Gastrocnemius medialis (tissue), 4 donors: ENCODE measurements at regions of chr5 and their contacts with region 1.

Region 1: DNA sequence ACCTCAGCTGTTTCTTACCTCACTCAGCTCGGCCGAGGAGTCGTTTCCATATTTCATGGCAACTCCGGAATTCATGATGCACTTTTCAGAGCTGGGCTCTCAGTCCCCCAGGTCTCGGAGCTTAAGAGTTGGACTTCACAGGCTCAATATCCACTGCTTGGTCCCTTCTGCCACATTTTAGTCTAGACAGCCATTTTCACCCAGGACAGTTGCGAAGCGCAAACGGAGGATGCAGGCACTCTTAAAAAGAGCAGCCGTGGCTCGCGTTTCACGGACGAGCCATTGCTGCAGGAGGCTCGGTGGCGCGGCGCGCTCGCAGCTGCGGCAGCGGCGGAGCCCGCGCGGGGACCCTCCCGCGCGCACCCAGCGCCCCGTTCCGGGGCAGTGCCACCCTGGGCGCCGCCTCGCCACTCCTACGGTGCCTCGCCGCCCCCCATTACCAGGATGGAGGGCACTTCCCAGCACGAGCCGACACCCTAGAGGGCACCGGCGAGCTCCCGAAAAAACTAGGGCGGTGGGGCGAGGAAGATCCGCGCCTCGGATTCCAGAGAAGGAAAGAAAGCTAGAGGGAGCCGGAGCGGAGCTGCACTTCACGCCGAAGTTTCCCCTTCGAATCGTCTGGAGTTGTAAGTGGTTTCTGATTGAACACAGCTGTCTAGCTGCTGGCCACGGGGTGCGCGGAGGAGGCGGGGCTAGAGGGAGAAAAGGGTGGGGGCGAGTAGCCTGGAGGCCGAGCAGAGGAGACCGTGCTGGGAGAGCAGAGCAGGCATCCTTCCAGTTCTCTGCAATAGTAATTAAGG is 140.3 kb downstream of the TSSK1B start:
- DNase-seq: peak; percentile 71 to 79
- ATAC-seq: peak; percentile 81 to 93
- H3K4me3 ChIP-seq: peak overlapping the region; percentile 50 to 71 (median 62)
- H3K27ac ChIP-seq: peak overlapping the region; percentile 66 to 75 (median 72)
- H3K4me1 ChIP-seq: peaks cover 6 to 11% of the 10 kb centered on the region in 2 donors
- H3K27me3 ChIP-seq: no peaks in the 10 kb centered on the region
- CTCF ChIP-seq: no peak
- POLR2A ChIP-seq: peak; percentile 60 to 79

Region 2: GRCh38 chr5:112995764-112996618 is 298.5 kb before region 1 on chr5:
- in situ Hi-C with region 1: no loop called
- intact Hi-C with region 1: loop called (anchors 10 kb)
- DNase-seq: peak; percentile 43 to 51
- ATAC-seq: peak; percentile 80 to 91
- H3K4me3 ChIP-seq: no peak overlapping the region
- H3K27ac ChIP-seq: no peak overlapping the region
- H3K4me1 ChIP-seq: peaks cover 0 to 13% of the 10 kb centered on the region in 2 donors
- H3K27me3 ChIP-seq: no peaks in the 10 kb centered on the region
- CTCF ChIP-seq: peak; percentile 61 to 87 (median 77)
- POLR2A ChIP-seq: no peak

Region 3: GRCh38 chr5:113119246-113119924 is 175.1 kb before region 1 on chr5:
- in situ Hi-C with region 1: no loop called
- intact Hi-C with region 1: loop called (anchors 10 kb)
- DNase-seq: peak in 1 of 2 donors; percentile 46
- ATAC-seq: peak; percentile 26 to 50
- H3K4me3 ChIP-seq: no peak overlapping the region
- H3K27ac ChIP-seq: peak overlapping the region in 3 of 4 donors; percentile 11 to 61 (median 22)
- H3K4me1 ChIP-seq: peaks cover 7 to 36% of the 10 kb centered on the region in 2 donors
- H3K27me3 ChIP-seq: no peaks in the 10 kb centered on the region
- CTCF ChIP-seq: no peak
- POLR2A ChIP-seq: no peak

Region 4: GRCh38 chr5:113204525-113205161 is 89.9 kb before region 1 on chr5:
- in situ Hi-C with region 1: no loop called
- intact Hi-C with region 1: loop called (anchors 5 kb)
- DNase-seq: peak; percentile 45 to 70
- ATAC-seq: peak; percentile 84 to 86
- H3K4me3 ChIP-seq: no peak overlapping the region
- H3K27ac ChIP-seq: peak overlapping the region in 1 of 4 donors; percentile 73
- H3K4me1 ChIP-seq: peaks cover 9 to 55% of the 10 kb centered on the region in 2 donors
- H3K27me3 ChIP-seq: no peaks in the 10 kb centered on the region
- CTCF ChIP-seq: no peak
- POLR2A ChIP-seq: no peak

Region 5: GRCh38 chr5:113232667-113233066 is 61.8 kb before region 1 on chr5:
- in situ Hi-C with region 1: no loop called
- intact Hi-C with region 1: loop called (anchors 10 kb)
- DNase-seq: no peak
- ATAC-seq: peak in 1 of 2 donors; percentile 48
- H3K4me3 ChIP-seq: no peak overlapping the region
- H3K27ac ChIP-seq: peak overlapping the region in 2 of 4 donors; percentile 5 to 68
- H3K4me1 ChIP-seq: peaks cover 17 to 44% of the 10 kb centered on the region in 2 donors
- H3K27me3 ChIP-seq: no peaks in the 10 kb centered on the region
- CTCF ChIP-seq: no peak
- POLR2A ChIP-seq: no peak

Region 6: DNA sequence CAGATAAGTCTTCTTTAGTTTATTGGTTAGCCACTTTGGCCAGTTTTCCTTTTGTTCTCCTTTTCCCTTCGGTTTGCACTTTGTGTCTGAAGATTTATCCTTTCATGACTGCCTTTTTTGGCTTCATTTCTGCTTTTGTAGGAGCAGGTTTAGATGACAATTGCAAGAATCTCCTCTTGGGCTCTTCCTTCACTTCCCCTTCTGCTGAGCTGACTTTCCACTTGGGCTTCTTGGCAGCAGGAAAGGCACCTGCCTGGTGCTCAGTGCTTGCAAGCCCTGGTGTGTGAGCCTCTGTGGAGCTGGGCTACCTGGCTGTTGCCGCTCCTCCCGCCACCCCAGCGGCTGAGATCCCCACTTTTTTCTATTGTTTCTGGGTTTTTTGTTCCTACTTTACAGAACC is 1994.6 kb after region 1 on chr5:
- in situ Hi-C with region 1: no loop called
- intact Hi-C with region 1: no loop called
- DNase-seq: no peak
- ATAC-seq: no peak
- H3K4me3 ChIP-seq: no peak overlapping the region
- H3K27ac ChIP-seq: no peak overlapping the region
- H3K4me1 ChIP-seq: no peaks in the 10 kb centered on the region
- H3K27me3 ChIP-seq: no peaks in the 10 kb centered on the region
- CTCF ChIP-seq: no peak
- POLR2A ChIP-seq: no peak